Panc1 (cell line): ENCODE measurements at regions of chr10 and their contacts with region 1.

Region 1: DNA sequence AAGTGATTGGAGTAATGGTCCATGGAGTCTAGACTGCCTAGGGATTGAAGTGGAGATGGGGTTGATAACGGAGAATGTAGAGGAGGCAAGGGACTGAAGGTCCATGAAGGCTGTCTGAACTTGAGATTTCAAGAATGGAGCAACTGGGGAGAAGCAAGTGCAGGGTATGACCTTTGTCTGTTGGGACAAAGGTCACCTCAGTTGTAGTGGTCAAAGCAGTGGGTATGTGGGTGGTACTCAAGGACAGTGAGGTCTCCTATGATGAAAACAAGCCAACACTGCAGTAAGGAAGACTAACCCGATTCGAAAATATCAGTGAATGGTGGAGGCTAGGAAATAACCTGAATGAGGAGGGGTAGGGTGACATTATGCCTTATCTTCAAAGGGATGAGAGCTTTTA is 5.4 kb upstream of the DDX21 start:
- DNase-seq: no peak
- ATAC-seq: no peak
- H3K4me3 ChIP-seq: no peak overlapping the region
- H3K27ac ChIP-seq: no peak overlapping the region
- H3K4me1 ChIP-seq: no peaks in the 10 kb centered on the region
- H3K27me3 ChIP-seq: no peaks in the 10 kb centered on the region
- CTCF ChIP-seq: no peak

Region 2: DNA sequence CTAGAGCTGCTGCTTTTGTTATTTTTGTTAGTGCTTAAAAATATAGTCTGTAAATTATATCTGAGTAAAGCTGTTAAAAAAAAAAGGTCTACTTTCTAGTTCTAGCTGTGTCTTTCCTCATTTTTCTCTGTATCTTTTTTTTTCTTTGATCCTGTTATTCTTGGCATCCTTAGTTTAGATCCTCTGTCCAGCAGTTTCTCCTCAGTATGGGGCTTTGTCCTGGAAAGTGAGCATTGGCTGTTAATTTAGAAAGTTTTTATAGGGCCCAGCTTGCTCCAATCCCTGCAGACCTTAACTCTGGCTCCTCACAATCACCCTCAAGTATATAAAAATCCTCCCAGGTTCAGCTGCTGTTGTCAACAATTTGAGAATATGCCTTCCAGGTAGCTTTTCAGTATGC is 26.0 kb before region 1 on chr10:
- CTCF ChIA-PET with region 1: interaction called, 20 read pairs
- POLR2A ChIA-PET with region 1: interaction called, 14 read pairs
- in situ Hi-C with region 1: no loop called
- intact Hi-C with region 1: no loop called
- DNase-seq: no peak
- ATAC-seq: no peak
- H3K4me3 ChIP-seq: no peak overlapping the region
- H3K27ac ChIP-seq: no peak overlapping the region
- H3K4me1 ChIP-seq: no peaks in the 10 kb centered on the region
- H3K27me3 ChIP-seq: no peaks in the 10 kb centered on the region
- CTCF ChIP-seq: no peak

Region 3: DNA sequence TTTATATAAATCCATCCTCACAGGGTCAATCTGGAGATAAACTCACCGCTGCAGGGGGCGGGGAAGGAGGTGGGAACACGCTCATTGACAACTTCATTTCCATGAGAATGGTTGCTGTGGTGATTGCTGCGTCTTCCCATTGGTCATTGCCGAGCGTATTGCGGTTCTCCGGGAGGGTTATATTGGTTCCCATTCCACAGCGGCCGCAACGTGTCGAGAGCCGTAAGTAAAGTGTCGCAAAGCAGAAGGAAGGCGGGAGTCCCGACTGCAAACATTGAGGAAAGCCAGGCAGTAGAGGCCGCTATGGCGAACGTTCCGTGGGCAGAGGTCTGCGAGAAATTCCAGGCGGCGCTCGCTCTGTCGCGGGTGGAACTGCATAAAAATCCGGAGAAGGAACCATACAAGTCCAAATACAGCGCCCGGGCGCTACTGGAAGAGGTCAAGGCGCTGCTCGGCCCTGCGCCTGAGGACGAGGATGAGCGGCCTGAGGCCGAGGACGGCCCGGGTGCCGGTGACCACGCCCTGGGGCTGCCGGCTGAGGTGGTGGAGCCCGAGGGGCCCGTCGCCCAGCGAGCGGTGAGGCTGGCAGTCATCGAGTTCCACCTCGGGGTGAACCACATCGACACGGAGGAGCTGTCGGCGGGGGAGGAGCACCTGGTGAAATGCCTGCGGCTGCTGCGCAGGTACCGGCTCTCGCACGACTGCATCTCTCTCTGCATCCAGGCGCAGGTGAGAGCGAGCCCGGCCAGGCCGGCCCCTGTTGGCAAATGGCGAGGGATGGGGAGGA is 38.1 kb after region 1 on chr10 and contains the start of gene KIFBP:
- CTCF ChIA-PET with region 1: no interaction called
- POLR2A ChIA-PET with region 1: no interaction called
- in situ Hi-C with region 1: no loop called
- intact Hi-C with region 1: no loop called
- DNase-seq: peak; percentile 97
- ATAC-seq: peak; percentile 93
- H3K4me3 ChIP-seq: peak within 1 kb of the TSS; percentile 72 to 86
- H3K27ac ChIP-seq: peak within 1 kb of the TSS; percentile 84
- H3K4me1 ChIP-seq: peaks cover 17% of the 10 kb centered on the region
- H3K27me3 ChIP-seq: no peaks in the 10 kb centered on the region
- CTCF ChIP-seq: peak; percentile 75
- total RNA-seq, gene KIFBP: 45.9 TPM

Region 4: DNA sequence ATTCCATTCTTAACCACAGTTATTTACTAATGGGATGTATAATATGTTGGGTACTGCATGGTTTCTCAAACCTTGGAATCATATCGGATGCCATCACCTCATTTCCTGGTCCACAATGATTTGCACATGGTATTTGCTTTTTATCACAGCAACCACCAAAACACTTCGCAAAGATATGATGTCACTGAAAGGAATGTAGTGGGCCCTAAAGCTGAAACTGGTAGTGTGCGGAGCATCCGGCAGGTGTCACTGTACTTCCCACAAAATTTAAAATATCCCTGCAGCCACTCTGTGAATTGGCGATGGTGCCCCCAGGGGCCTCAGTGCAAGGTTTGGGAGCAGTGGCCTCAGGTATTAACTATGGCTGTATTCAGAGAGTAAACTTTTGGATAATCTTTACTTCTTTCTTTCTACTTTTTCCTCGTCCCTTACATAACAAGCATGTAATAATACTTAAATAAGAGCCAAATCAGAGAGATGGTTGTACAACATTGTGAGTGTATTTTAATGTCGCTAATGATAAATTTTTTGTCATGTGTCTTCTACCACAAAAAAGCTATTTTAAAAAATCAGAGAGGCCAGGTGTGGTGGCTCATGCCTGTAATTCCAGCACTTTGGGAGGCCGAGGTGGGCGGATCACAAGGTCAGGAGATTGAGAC is 745.6 kb after region 1 on chr10:
- CTCF ChIA-PET with region 1: no interaction called
- POLR2A ChIA-PET with region 1: no interaction called
- in situ Hi-C with region 1: no loop called
- intact Hi-C with region 1: no loop called
- DNase-seq: no peak
- ATAC-seq: peak; percentile 86
- H3K4me3 ChIP-seq: no peak overlapping the region
- H3K27ac ChIP-seq: no peak overlapping the region
- H3K4me1 ChIP-seq: no peaks in the 10 kb centered on the region
- H3K27me3 ChIP-seq: peaks cover 19% of the 10 kb centered on the region
- CTCF ChIP-seq: peak; percentile 93